Calu3 (cell line): ENCODE measurements at regions of chr15 and their contacts with region 1.

Region 1: DNA sequence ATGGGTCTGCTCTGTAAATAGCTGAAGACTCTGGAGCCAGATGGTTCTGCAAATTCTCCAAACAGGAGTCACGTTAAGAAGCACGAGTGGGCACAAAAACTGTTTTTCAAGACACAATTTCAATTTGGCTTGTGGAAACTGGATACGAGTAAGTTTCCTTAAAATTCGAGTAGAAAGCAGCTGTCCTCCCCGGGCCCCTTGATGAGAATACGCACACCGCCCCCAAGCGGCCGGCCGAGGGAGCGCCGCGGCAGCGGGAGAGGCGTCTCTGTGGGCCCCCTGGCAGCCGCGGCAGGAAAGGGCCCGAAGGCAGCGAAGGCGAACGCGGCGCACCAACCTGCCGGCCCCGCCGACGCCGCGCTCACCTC is 778 bp upstream of the THBS1 start:
- DNase-seq: peak; percentile 90
- H3K4me3 Mint-ChIP-seq: peak overlapping the region; percentile 75
- H3K27ac Mint-ChIP-seq: peak overlapping the region; percentile 94
- H3K4me1 Mint-ChIP-seq: peaks cover 9% of the 10 kb centered on the region
- H3K27me3 Mint-ChIP-seq: no peaks in the 10 kb centered on the region
- CTCF ChIP-seq: peak; percentile 63

Region 2: DNA sequence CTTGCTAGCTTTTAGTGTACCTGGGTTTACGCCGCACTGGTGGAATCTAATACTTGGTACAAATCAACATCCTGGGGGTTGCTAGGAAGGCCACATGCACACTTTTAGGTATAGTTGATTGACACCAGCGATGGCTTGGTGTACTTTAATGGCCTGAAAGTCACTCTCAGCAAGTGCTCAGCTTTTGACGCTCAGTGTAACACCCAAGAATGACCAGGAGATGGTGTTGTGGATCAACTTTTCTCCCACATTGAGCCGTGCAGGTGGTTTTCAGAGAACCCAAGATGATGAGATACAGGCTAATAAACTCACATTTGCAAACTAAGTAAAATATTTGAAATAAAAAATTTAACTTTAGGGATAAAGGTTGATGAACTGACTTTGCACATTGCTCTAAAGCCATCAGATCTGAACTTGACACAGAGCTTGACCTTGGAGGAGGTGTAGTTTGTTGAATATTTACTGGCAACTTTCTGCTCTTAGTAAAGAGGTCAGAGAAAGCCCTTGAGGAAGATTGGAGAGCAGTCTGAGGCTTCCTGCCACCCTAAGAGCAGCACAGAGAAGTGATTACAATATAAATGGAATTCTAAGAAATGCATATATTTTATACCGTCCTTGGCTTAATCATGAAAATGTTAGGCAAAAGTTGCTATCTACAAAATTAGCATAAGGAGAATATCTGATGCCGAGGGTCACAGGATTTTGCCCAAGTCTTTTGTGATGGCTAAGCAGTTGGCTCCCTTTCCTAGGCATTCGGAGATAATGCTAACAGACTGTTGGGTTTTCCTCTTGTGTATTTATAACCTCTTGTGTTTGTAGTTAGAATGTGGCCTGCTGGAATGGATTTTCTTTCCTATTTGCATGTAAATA is 872.1 kb before region 1 on chr15:
- CTCF ChIA-PET with region 1: no interaction called
- intact Hi-C with region 1: loop called (anchors 2 kb)
- DNase-seq: peak; percentile 43
- H3K4me3 Mint-ChIP-seq: no peak overlapping the region
- H3K27ac Mint-ChIP-seq: no peak overlapping the region
- H3K4me1 Mint-ChIP-seq: no peaks in the 10 kb centered on the region
- H3K27me3 Mint-ChIP-seq: no peaks in the 10 kb centered on the region
- CTCF ChIP-seq: no peak

Region 3: GRCh38 chr15:38991126-38991525 is 589.0 kb before region 1 on chr15:
- CTCF ChIA-PET with region 1: no interaction called
- intact Hi-C with region 1: loop called (anchors 10 kb)
- DNase-seq: no peak
- H3K4me3 Mint-ChIP-seq: no peak overlapping the region
- H3K27ac Mint-ChIP-seq: no peak overlapping the region
- H3K4me1 Mint-ChIP-seq: peaks cover 29% of the 10 kb centered on the region
- H3K27me3 Mint-ChIP-seq: no peaks in the 10 kb centered on the region
- CTCF ChIP-seq: peak; percentile 28

Region 4: DNA sequence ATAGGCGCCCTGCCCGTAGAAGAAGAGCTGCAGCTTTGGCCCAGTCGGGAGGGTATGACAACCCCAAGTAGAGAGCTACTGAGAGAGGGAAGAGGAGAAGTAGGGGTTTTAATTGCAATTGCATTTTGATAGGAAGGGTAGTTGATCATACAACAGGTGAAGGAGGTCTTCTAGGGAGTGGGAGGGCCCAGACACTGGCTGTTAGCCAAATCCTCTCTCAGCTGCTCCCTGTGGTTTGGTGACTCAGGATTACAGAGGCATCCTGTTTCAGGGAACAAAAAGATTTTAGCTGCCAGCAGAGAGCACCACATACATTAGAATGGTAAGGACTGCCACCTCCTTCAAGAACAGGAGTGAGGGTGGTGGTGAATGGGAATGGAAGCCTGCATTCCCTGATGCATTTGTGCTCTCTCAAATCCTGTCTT is 408.1 kb before region 1 on chr15:
- CTCF ChIA-PET with region 1: interaction called, 37 read pairs
- intact Hi-C with region 1: loop called (anchors 1 kb)
- DNase-seq: peak; percentile 79
- H3K4me3 Mint-ChIP-seq: no peak overlapping the region
- H3K27ac Mint-ChIP-seq: no peak overlapping the region
- H3K4me1 Mint-ChIP-seq: peaks cover 33% of the 10 kb centered on the region
- H3K27me3 Mint-ChIP-seq: no peaks in the 10 kb centered on the region
- CTCF ChIP-seq: no peak

Region 5: DNA sequence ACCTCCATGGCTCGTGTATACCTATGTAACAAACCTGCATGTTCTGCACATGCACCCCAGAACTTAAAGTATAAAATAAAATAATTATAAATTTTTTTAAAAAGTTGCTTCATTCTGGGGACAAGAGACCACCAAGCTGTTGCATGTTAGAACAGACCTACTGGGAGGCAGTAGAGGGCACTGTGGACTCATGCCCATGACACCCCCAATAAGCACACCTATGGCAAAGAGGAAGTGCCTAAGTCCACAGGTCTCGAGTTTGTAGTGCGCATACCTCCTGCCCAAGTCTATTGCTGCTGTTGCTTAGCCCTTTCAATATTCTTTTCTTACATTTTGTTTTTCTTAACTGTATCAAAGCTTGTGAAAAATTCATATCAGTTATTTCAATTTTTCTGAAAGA is 267.1 kb before region 1 on chr15:
- CTCF ChIA-PET with region 1: interaction called, 9 read pairs
- intact Hi-C with region 1: loop called (anchors 2 kb)
- DNase-seq: peak; percentile 39
- H3K4me3 Mint-ChIP-seq: no peak overlapping the region
- H3K27ac Mint-ChIP-seq: no peak overlapping the region
- H3K4me1 Mint-ChIP-seq: no peaks in the 10 kb centered on the region
- H3K27me3 Mint-ChIP-seq: no peaks in the 10 kb centered on the region
- CTCF ChIP-seq: no peak

Region 6: DNA sequence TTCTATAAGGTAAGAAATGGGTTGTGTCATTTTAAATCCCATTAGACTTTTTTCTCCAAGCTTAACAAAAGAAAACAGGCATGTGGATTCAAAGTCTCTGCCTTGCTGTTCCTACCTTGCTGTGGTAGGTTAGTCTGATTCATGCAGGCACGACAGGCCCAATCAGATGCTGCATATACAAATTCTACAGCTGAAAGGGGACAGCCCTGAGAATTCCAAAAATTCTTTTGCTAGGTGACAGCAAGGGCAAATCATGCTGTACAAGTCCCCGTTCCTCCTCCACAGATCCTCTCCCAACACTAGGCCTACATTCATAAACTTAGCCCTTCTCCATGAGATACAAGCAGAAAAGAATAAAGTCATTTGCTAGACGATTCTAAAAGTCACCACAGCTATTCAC is 160.4 kb before region 1 on chr15:
- CTCF ChIA-PET with region 1: no interaction called
- intact Hi-C with region 1: no loop called
- DNase-seq: no peak
- H3K4me3 Mint-ChIP-seq: no peak overlapping the region
- H3K27ac Mint-ChIP-seq: no peak overlapping the region
- H3K4me1 Mint-ChIP-seq: peaks cover 3% of the 10 kb centered on the region
- H3K27me3 Mint-ChIP-seq: no peaks in the 10 kb centered on the region
- CTCF ChIP-seq: no peak

Region 7: DNA sequence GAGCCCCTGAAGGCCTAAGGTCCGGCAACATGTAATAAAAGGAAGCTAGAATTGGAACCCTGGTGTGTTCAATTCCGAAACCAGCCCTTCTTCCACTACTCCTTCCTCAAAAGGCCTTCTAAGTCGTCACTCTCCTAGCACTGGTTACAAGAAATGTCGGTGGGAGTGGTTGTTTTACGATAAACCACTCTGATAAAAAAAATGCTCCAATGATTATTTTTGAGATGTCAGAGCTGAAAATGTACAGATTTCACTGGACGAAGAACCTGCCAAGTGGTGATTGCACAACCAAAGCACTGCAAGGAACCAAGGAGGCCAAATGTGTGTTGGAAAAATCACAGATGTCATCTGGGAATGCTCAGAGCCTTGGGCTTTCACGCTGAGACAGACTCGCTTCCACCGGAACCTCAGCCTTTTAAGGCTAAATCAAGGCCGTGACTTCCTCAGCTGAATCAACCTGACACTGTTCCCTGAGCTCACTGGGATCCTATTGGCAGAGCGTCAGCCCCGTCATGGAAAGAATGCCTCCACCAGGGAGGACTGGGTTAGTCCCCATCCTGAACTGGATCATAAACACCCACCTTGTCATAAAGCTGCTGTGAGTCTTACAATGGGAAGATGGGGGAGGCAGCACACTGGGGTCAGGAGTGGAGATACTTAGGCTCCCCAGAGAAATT is 107.3 kb before region 1 on chr15:
- CTCF ChIA-PET with region 1: no interaction called
- intact Hi-C with region 1: no loop called
- DNase-seq: no peak
- H3K4me3 Mint-ChIP-seq: no peak overlapping the region
- H3K27ac Mint-ChIP-seq: no peak overlapping the region
- H3K4me1 Mint-ChIP-seq: no peaks in the 10 kb centered on the region
- H3K27me3 Mint-ChIP-seq: no peaks in the 10 kb centered on the region
- CTCF ChIP-seq: no peak